GM12878 (cell line): ENCODE measurements at regions of chr3 and their contacts with region 1.

Region 1: GRCh38 chr3:64399205-64399800 is 174.0 kb upstream of the PRICKLE2 start:
- DNase-seq: no peak
- ATAC-seq: peak; percentile 77
- H3K4me3 ChIP-seq: no peak overlapping the region
- H3K27ac ChIP-seq: no peak overlapping the region
- H3K4me1 ChIP-seq: no peaks in the 10 kb centered on the region
- H3K27me3 ChIP-seq: no peaks in the 10 kb centered on the region
- CTCF ChIP-seq: peak; percentile 58 to 65 (median 60); a peak in 5 of 6 replicates
- EP300 ChIP-seq: no peak
- POLR2A ChIP-seq: no peak
- RAD21 ChIP-seq: peak; percentile 78

Region 2: GRCh38 chr3:64244011-64244942 is 155.0 kb before region 1 on chr3:
- CTCF ChIA-PET with region 1: interaction called, 9 read pairs
- POLR2A ChIA-PET with region 1: no interaction called
- RAD21 ChIA-PET with region 1: interaction called, 3 read pairs
- SMC1A ChIA-PET with region 1: interaction called, 8 read pairs
- in situ Hi-C with region 1: no loop called
- intact Hi-C with region 1: loop called (anchors 5 kb)
- DNase-seq: no peak
- ATAC-seq: peak; percentile 77
- H3K4me3 ChIP-seq: no peak overlapping the region
- H3K27ac ChIP-seq: no peak overlapping the region
- H3K4me1 ChIP-seq: no peaks in the 10 kb centered on the region
- H3K27me3 ChIP-seq: no peaks in the 10 kb centered on the region
- CTCF ChIP-seq: peak; percentile 24 to 51 (median 35); a peak in 3 of 6 replicates
- EP300 ChIP-seq: no peak
- POLR2A ChIP-seq: no peak
- RAD21 ChIP-seq: peak; percentile 44; the same call in 1 of the 2 replicates

Region 3: DNA sequence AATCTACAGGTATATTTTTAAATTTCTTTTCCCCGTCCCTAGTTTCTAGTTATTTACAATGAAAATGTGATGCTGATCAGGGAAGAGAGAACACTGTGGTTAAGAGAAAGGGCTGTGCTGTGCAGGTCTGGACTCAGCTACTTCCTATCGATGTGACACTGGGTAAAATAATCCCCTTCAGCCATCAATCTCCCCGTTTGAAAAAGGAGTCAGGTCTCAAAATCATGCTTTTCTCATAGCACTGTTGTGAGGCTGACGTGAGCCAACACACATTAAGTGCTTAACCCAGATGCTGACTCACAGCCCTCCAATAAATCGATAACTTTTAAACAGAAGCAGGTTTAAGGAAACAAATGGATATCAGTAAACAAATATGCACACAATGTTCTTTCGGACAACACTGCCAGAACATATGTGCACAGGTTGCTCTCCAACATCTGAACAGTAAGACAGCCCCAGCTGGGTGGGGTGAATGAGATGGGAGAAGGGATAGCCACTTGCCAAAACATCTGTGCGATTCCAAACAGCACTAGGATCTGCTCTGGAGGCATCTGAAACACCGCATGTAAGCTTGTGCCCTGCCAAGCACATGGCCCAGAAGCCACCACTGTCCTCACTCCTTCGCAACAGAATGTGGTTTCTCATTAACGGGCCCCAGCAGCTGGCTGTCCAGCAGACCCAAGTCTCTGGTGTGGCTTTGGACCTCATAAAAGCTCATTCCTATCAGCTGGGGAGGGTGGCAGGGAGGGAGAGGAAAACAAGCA is 30.9 kb before region 1 on chr3:
- CTCF ChIA-PET with region 1: interaction called, 12 read pairs
- POLR2A ChIA-PET with region 1: no interaction called
- RAD21 ChIA-PET with region 1: interaction called, 4 read pairs
- SMC1A ChIA-PET with region 1: interaction called, 14 read pairs
- in situ Hi-C with region 1: no loop called
- intact Hi-C with region 1: no loop called
- DNase-seq: no peak
- ATAC-seq: no peak; the same call in 2 of the 3 replicates
- H3K4me3 ChIP-seq: no peak overlapping the region
- H3K27ac ChIP-seq: no peak overlapping the region
- H3K4me1 ChIP-seq: no peaks in the 10 kb centered on the region
- H3K27me3 ChIP-seq: no peaks in the 10 kb centered on the region
- CTCF ChIP-seq: no peak
- EP300 ChIP-seq: no peak
- POLR2A ChIP-seq: no peak
- RAD21 ChIP-seq: no peak

Region 4: GRCh38 chr3:64417816-64418215 is 18.5 kb after region 1 on chr3:
- CTCF ChIA-PET with region 1: interaction called, 14 read pairs
- POLR2A ChIA-PET with region 1: interaction called, 6 read pairs
- RAD21 ChIA-PET with region 1: interaction called, 5 read pairs
- SMC1A ChIA-PET with region 1: interaction called, 33 read pairs
- in situ Hi-C with region 1: no loop called
- intact Hi-C with region 1: no loop called
- DNase-seq: peak; percentile 33
- ATAC-seq: peak; percentile 90
- H3K4me3 ChIP-seq: no peak overlapping the region
- H3K27ac ChIP-seq: no peak overlapping the region
- H3K4me1 ChIP-seq: 0 out of 2 replicates have a peak, but pooled peaks cover 5% of the 10 kb centered on the region
- H3K27me3 ChIP-seq: no peaks in the 10 kb centered on the region
- CTCF ChIP-seq: no peak
- EP300 ChIP-seq: 0 out of 4 replicates have a peak, but pooled peaks of 1 of the 2 experiments have one; percentile 23
- POLR2A ChIP-seq: no peak
- RAD21 ChIP-seq: no peak

Region 5: GRCh38 chr3:64462203-64462602 is 62.9 kb after region 1 on chr3:
- CTCF ChIA-PET with region 1: interaction called, 70 read pairs
- POLR2A ChIA-PET with region 1: interaction called, 4 read pairs
- RAD21 ChIA-PET with region 1: interaction called, 32 read pairs
- SMC1A ChIA-PET with region 1: interaction called, 72 read pairs
- in situ Hi-C with region 1: no loop called
- intact Hi-C with region 1: loop called (anchors 5 kb)
- DNase-seq: no peak
- ATAC-seq: no peak
- H3K4me3 ChIP-seq: no peak overlapping the region
- H3K27ac ChIP-seq: no peak overlapping the region
- H3K4me1 ChIP-seq: no peaks in the 10 kb centered on the region
- H3K27me3 ChIP-seq: no peaks in the 10 kb centered on the region
- CTCF ChIP-seq: no peak
- EP300 ChIP-seq: no peak
- POLR2A ChIP-seq: no peak
- RAD21 ChIP-seq: no peak

Region 6: DNA sequence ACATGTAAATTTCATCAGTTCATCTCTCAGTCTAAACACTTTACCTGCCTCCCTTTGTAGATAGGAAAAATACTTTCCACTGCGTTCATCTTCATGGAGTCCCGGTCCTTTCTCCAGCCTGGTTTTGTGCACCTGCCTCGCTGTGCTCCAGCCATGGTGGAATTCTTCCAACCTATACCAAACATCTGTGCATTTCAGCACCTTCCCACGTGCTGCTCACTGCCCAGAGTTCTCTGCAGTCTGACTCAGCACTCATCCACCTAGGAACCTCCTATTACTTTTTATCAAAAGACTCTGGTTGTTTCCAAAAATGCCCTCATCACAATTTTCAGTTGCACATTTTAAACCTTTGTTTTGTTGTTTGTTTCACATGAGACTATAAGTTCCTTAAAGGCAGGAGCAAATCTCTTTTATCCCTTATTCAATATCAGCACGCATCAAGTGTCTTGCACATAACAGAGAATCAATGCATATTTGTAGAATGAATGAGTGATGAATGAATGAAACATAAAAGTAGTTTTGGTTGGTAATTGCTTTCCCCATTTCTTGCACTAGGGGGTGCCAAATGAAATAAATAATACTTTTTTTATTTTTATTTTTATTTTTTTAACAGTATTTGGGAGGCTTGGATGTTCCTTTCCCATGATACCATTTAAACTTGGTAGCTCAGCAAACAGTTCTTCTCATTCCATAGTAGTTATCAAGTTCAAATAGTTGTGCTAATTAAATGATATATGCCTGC is 318.7 kb after region 1 on chr3:
- CTCF ChIA-PET with region 1: no interaction called
- POLR2A ChIA-PET with region 1: no interaction called
- RAD21 ChIA-PET with region 1: no interaction called
- SMC1A ChIA-PET with region 1: no interaction called
- in situ Hi-C with region 1: no loop called
- intact Hi-C with region 1: no loop called
- DNase-seq: no peak
- ATAC-seq: no peak
- H3K4me3 ChIP-seq: no peak overlapping the region
- H3K27ac ChIP-seq: no peak overlapping the region
- H3K4me1 ChIP-seq: no peaks in the 10 kb centered on the region
- H3K27me3 ChIP-seq: no peaks in the 10 kb centered on the region
- CTCF ChIP-seq: no peak
- EP300 ChIP-seq: no peak
- POLR2A ChIP-seq: no peak
- RAD21 ChIP-seq: no peak